GM10248 (cell line): ENCODE measurements at regions of chrX and their contacts with region 1.

Region 1: DNA sequence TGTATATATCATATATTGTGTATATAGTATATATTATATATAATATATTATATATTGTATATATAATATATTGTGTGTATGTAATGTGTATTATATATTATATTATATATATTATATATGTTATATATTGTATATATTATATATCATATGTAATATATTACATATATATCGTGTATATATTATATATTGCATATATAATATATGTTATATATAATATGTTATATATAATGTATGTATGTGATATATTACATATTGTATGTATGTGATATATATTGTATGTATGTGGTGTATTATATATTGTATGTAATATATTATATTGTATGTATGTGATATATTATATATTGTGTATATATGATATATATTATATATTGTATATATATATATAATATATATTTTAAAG is 30.5 kb downstream of the RAB40A start:
- DNase-seq: no peak
- CTCF ChIP-seq: no peak

Region 2: DNA sequence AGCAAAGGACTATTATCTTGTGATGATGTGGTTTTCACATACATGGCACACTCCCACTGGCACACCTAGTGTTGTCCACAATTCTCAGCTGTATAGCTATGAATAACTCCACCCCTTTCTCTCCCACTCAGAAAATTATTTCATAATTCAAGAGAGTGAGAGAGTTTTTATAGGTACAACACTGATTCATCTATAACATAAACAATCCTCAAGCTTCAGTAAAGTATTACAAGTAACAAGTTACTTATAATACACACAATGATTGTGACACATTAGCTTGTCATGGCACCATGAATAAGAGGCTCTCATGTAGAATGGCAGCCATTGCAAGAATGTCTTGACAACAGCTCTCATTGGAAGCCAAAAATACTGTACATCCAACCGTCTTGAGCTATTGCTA is 13.4 kb before region 1 on chrX:
- CTCF ChIA-PET with region 1: interaction called, 15 read pairs
- POLR2A ChIA-PET with region 1: no interaction called
- DNase-seq: no peak
- CTCF ChIP-seq: no peak